Activated CD4-positive, alpha-beta T cell treated with anti-CD3 and anti-CD28 coated beads, Interleukin-2, amount 10 ng/mL, durations not matched to agents 7 days and 5 days (primary cell): ENCODE measurements at regions of chr11 and their contacts with region 1.

Region 1: DNA sequence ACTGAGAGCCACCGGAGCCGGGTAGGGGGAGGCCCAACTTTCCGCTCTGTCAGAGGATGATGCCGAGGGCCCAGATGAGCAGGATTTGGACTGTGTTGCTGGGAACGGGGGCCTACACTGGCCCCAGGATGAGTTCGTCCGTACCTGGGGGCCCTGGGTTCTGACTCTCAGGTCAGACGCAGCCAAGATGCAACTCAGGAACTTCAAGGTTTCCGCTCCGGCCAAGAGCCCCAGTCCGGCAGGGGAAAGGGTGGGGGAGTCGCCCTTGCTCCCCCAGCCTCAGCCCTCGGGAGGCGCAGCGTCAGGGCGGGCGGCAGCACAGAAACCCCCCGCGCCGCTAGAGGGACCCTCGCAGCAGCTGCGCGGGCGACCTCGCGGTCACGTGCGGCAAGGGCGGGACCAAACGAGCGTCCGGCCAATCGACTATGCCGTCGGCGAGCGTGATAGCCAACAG is 241 bp upstream of the ARL2 start:
- DNase-seq: peak; percentile 85
- H3K4me3 Mint-ChIP-seq: peak overlapping the region; percentile 84
- H3K27ac Mint-ChIP-seq: peak overlapping the region; percentile 97
- H3K4me1 Mint-ChIP-seq: peaks cover 26% of the 10 kb centered on the region
- H3K27me3 Mint-ChIP-seq: no peaks in the 10 kb centered on the region

Region 2: DNA sequence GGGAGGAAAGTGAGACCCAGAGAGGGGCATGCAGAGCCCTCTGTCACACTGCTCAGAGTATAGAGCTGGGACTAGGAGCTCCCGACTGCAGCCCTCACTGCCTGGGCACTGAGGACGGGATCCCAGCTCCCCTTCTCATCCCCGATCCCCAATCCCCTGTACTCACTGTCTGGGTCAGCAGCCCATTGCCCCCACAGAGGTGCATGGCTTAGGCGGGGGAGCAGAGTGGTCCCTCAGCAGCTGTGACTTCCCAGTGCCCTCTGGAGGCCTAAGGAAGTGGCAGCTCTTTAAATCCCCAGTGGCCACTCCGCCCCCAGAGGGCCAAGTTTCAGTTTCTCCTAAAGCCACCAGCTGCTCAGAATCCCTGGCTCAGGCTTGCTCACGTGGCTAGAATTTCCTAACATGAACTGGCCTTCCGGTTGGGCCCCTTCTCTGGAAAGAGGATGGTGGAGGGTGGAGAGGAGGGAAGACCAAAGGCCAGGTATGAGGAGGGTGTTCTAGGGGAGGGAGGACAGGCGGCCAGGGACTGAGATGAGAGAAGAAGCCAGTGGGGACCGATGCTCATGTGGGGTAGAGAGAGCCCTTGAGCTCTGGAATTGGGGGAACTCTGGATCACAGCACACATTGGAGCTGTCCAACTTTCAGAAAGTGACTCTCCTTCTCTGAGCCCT is 16.9 kb before region 1 on chr11 and contains the start of gene BATF2:
- CTCF ChIA-PET with region 1: interaction called, 54 read pairs
- POLR2A ChIA-PET with region 1: no interaction called
- DNase-seq: no peak
- H3K4me3 Mint-ChIP-seq: peak within 1 kb of the TSS; percentile 38
- H3K27ac Mint-ChIP-seq: peak within 1 kb of the TSS; percentile 61
- H3K4me1 Mint-ChIP-seq: peaks cover 24% of the 10 kb centered on the region
- H3K27me3 Mint-ChIP-seq: peaks cover 4% of the 10 kb centered on the region
- total RNA-seq, gene BATF2: 0.10 TPM in 1 of 2 experiments, not detected in the other

Region 3: GRCh38 chr11:65003282-65003681 is 10.4 kb before region 1 on chr11:
- CTCF ChIA-PET with region 1: interaction called, 54 read pairs
- POLR2A ChIA-PET with region 1: no interaction called
- DNase-seq: no peak
- H3K4me3 Mint-ChIP-seq: no peak overlapping the region
- H3K27ac Mint-ChIP-seq: no peak overlapping the region
- H3K4me1 Mint-ChIP-seq: peaks cover 7% of the 10 kb centered on the region
- H3K27me3 Mint-ChIP-seq: no peaks in the 10 kb centered on the region

Region 4: GRCh38 chr11:65027213-65028067 is 13.7 kb after region 1 on chr11 and contains the start of gene SNX15:
- CTCF ChIA-PET with region 1: interaction called, 25 read pairs
- POLR2A ChIA-PET with region 1: no interaction called
- DNase-seq: peak; percentile 96
- H3K4me3 Mint-ChIP-seq: peak within 1 kb of the TSS; percentile 78
- H3K27ac Mint-ChIP-seq: peak within 1 kb of the TSS; percentile 93
- H3K4me1 Mint-ChIP-seq: peaks cover 19% of the 10 kb centered on the region
- H3K27me3 Mint-ChIP-seq: no peaks in the 10 kb centered on the region
- total RNA-seq, gene SNX15: 28.3 to 34.8 TPM

Region 5: DNA sequence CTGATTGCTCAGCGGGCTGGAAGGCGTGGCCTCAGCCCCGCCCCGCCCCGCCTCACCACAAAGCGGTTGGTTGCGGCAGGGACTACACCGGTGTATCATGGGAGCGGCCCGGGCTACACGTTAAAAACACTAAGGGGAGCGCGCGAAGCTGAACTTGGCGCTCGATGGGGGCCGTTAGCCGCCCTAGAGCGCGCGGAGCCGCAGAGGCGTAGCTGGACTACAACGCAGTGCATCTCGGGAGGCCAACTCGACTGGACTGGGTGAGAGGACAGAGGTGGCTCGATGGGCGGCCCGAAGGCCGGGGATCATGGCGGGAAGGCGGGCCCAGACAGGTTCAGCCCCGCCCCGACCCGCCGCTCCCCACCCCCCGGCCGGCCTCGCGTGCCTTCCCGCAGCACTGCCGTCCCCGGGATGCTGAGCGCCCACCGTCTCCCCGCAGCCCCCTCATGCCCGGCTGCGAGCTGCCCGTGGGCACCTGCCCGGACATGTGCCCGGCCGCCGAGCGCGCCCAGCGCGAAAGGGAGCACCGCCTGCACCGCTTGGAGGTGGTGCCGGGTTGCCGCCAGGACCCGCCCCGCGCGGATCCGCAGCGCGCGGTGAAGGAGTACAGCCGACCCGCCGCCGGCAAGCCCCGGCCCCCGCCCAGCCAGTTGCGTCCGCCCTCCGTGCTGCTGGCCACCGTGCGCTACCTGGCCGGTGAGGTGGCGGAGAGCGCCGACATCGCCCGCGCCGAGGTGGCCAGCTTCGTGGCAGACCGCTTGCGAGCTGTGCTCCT is 27.3 kb after region 1 on chr11 and contains the start of gene SAC3D1:
- CTCF ChIA-PET with region 1: interaction called, 13 read pairs
- POLR2A ChIA-PET with region 1: no interaction called
- DNase-seq: peak; percentile 95
- H3K4me3 Mint-ChIP-seq: peak within 1 kb of the TSS; percentile 90
- H3K27ac Mint-ChIP-seq: peak within 1 kb of the TSS; percentile 98
- H3K4me1 Mint-ChIP-seq: peaks cover 34% of the 10 kb centered on the region
- H3K27me3 Mint-ChIP-seq: no peaks in the 10 kb centered on the region
- total RNA-seq, gene SAC3D1: 35.9 to 40.5 TPM

Region 6: DNA sequence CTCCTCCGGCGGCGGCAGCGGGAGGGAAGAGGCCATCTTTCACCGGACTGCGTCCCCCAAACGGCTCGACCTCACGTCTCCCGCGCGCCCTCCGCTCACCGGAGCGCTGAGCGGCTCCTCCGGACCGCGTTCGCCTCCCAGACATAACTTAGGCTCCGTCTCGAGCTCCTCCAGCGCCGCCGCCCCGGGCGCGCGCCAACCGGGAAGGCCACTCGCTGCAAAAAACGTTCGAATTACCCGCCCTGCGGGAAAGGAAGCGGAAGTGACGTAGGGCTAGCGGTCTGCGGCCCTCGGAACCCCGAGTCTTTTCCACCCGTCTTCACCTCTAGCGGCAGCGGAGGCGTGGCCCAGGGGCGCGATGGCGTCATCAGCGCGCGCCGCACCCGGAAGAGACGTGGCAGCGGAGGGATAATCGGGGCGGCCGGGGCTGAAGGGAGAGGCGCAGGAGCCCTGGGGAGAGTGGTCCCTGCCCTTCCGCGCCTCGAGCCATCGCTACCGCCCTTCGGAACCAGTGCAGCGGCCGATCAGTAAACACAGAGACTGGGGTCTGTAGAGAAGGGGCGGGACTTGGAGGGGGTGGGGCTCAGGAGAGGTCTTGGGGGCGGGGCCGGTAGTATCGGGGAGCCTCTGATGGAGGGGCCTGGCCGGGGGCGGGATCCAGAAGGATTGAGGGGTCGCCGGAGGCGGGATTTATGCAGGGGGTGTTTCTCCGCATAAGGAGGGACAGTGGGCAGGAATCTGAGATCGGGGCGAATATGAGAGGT is 70.3 kb after region 1 on chr11 and contains the starts of genes CDCA5 and ZFPL1:
- CTCF ChIA-PET with region 1: interaction called, 11 read pairs
- POLR2A ChIA-PET with region 1: no interaction called
- DNase-seq: peak; percentile 97
- H3K4me3 Mint-ChIP-seq: peak within 1 kb of the TSS; percentile 98
- H3K27ac Mint-ChIP-seq: peak within 1 kb of the TSS; percentile 99
- H3K4me1 Mint-ChIP-seq: peaks cover 51% of the 10 kb centered on the region
- H3K27me3 Mint-ChIP-seq: no peaks in the 10 kb centered on the region
- total RNA-seq, gene CDCA5: 105 to 109 TPM
- total RNA-seq, gene ZFPL1: 27.2 to 29.8 TPM

Region 7: GRCh38 chr11:65111744-65112414 is 98.2 kb after region 1 on chr11 and contains the start of gene TM7SF2:
- CTCF ChIA-PET with region 1: interaction called, 17 read pairs
- POLR2A ChIA-PET with region 1: no interaction called
- DNase-seq: peak; percentile 97
- H3K4me3 Mint-ChIP-seq: peak within 1 kb of the TSS; percentile 86
- H3K27ac Mint-ChIP-seq: peak within 1 kb of the TSS; percentile 92
- H3K4me1 Mint-ChIP-seq: peaks cover 51% of the 10 kb centered on the region
- H3K27me3 Mint-ChIP-seq: no peaks in the 10 kb centered on the region
- total RNA-seq, gene TM7SF2: 26.1 to 27.7 TPM